Endothelial cell of umbilical vein (primary cell): ENCODE measurements at regions of chr5 and their contacts with region 1.

Region 1: GRCh38 chr5:16456103-16456832 is 9.3 kb downstream of the ZNF622 start:
- DNase-seq: peak; percentile 75
- H3K4me3 ChIP-seq: no peak overlapping the region
- H3K27ac ChIP-seq: peak overlapping the region; percentile 85
- H3K4me1 ChIP-seq: peaks cover 12% of the 10 kb centered on the region
- H3K27me3 ChIP-seq: no peaks in the 10 kb centered on the region
- CTCF ChIP-seq: peak; percentile 56 to 65
- POLR2A ChIP-seq: no peak

Region 2: GRCh38 chr5:16471387-16471786 is 15.1 kb after region 1 on chr5:
- CTCF ChIA-PET with region 1: interaction called, 24 read pairs
- POLR2A ChIA-PET with region 1: no interaction called
- dilution Hi-C with region 1: no loop called
- intact Hi-C with region 1: no loop called
- DNase-seq: no peak
- H3K4me3 ChIP-seq: no peak overlapping the region
- H3K27ac ChIP-seq: no peak overlapping the region
- H3K4me1 ChIP-seq: peaks cover 12% of the 10 kb centered on the region
- H3K27me3 ChIP-seq: no peaks in the 10 kb centered on the region
- CTCF ChIP-seq: no peak
- POLR2A ChIP-seq: no peak

Region 3: DNA sequence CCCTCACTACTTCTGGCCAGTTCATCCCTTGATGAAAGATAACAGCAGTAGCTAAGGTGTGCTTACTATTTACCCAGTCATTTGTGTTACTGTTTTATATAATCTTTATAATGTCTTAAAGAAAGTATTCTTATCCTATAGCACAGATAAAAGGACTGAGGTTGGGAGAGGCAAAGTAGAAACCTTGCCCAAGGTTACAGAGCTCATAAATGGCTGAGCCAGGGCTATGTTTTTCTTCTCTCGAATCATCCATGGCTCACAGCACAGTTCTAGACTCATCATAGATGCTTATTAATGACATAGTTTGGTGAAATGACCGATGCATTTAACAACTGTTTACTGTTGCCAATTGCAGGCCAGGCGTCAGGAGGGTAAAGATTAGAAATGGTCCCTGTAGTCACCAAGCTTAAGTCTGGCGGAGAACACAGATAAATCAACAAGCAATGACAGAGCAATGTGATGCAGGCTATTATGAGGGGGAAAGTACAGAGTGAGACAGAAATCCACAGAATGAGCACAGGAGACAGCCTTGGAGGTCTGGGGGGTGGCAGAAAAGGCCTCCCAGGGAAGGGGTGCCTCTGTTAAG is 74.9 kb after region 1 on chr5:
- CTCF ChIA-PET with region 1: no interaction called
- POLR2A ChIA-PET with region 1: no interaction called
- dilution Hi-C with region 1: no loop called
- intact Hi-C with region 1: no loop called
- DNase-seq: no peak
- H3K4me3 ChIP-seq: no peak overlapping the region
- H3K27ac ChIP-seq: no peak overlapping the region
- H3K4me1 ChIP-seq: no peaks in the 10 kb centered on the region
- H3K27me3 ChIP-seq: no peaks in the 10 kb centered on the region
- CTCF ChIP-seq: no peak
- POLR2A ChIP-seq: no peak